Upper lobe of right lung (tissue), 1 donor: ENCODE measurements at regions of chr5 and their contacts with region 1.

Region 1: DNA sequence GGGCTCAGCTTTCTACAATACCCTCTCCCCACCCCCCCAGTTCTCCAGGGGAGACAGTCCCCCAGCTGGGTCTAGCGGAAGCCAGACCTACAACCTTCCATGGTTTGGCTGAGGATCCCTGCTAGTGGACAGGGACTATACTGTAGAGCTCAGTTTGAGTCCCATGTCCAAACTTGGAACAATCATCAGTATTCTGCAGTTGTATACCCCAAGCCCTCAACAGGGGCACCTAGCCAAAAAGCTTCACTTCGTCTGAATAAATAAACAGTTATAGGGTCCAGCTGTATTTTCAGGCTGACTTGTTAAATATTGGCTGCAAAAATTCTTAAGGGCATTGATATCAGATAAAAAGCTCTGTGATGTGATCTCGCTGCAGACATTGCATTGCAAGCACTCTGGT is 15.4 kb upstream of the C9 start:
- DNase-seq: no peak
- ATAC-seq: no peak
- H3K4me3 ChIP-seq: no peak overlapping the region
- H3K27ac ChIP-seq: no peak overlapping the region
- H3K4me1 ChIP-seq: no peaks in the 10 kb centered on the region
- H3K27me3 ChIP-seq: no peaks in the 10 kb centered on the region
- CTCF ChIP-seq: no peak

Region 2: GRCh38 chr5:39547553-39548154 is 168.0 kb after region 1 on chr5:
- intact Hi-C with region 1: loop called (anchors 5 kb)
- DNase-seq: no peak
- ATAC-seq: peak; percentile 85
- H3K4me3 ChIP-seq: peak overlapping the region; percentile 15
- H3K27ac ChIP-seq: peak overlapping the region; percentile 27
- H3K4me1 ChIP-seq: no peaks in the 10 kb centered on the region
- H3K27me3 ChIP-seq: no peaks in the 10 kb centered on the region
- CTCF ChIP-seq: peak; percentile 81